Activated B cell treated with CpG ODN at 0.5 μM for 24 hours (primary cell): ENCODE measurements at regions of chr10 and their contacts with region 1.

Region 1: DNA sequence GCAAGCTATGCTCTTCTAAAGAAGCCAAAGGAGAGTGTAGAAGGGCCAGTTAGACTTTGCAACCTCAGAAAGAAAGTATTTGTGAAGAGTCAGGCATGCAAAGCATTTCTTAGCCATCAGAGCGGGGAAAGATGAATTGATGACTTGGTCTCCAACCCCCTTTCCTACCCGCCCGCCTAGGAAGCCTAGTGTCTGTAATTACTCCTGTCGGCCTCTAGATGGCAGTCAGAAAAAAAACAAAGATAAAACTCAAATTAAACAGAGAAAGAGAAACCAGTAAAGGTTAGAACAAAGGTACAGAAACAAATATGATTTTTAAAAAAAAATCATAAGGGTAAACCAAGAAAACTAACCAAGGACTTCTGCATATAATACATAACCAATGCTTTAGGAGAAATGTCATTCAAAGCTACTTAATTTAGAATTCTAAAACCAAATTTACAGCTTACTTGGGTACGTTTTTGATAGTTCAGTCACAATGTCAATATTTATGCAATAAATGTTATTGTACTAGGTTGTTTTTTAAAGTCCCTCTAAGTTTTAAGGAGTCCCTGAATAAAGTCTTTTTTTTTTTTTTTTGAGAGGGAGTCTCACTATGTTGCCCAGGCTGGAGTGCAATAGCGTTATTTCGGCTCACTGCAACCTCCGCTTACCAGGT is 97.6 kb downstream of the LYZL1 start:
- DNase-seq: no peak
- ATAC-seq: peak; percentile 49
- H3K4me3 Mint-ChIP-seq: no peak overlapping the region
- H3K27ac Mint-ChIP-seq: no peak overlapping the region
- H3K4me1 Mint-ChIP-seq: no peaks in the 10 kb centered on the region
- H3K27me3 Mint-ChIP-seq: peaks cover 4% of the 10 kb centered on the region
- CTCF ChIP-seq: peak; percentile 34

Region 2: DNA sequence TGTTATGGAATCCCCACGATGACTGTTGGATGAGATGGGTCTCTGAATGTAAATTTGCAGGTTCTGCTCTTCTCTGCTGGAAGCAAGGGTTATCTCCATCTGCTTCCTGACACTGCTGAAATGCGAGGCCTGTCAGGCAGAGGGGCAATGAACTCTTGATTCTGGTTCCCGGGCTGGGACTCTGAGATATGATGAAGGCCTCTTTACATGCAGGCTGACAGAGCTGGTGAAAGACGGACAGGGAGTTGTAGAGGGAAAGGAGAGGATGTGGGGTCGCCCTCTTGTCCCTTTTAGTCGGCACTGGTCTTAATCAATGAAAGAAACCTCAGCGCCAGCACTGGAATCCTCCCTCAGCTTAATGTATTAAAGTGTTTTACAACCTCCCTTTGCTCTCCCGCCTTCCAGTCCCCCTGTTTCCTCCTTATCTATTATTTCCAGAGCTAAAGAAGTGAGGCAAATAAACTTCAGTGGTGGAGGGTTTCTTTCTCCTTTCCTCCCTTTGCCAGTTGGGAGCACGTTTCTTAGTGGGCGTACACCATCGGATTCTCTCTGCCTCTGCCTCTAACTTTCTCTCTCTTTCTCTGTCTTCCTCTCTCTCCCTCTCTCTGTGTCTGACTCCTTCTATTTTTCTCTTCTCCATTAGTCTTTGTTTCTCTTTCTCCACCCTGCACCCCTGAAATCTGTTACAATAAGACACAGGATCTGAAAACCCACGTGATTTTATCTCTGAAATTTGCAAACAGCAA is 563.6 kb before region 1 on chr10:
- CTCF ChIA-PET with region 1: no interaction called
- POLR2A ChIA-PET with region 1: no interaction called
- intact Hi-C with region 1: no loop called
- DNase-seq: no peak
- ATAC-seq: no peak
- H3K4me3 Mint-ChIP-seq: no peak overlapping the region
- H3K27ac Mint-ChIP-seq: no peak overlapping the region
- H3K4me1 Mint-ChIP-seq: no peaks in the 10 kb centered on the region
- H3K27me3 Mint-ChIP-seq: no peaks in the 10 kb centered on the region
- CTCF ChIP-seq: no peak

Region 3: GRCh38 chr10:29496341-29497162 is 110.1 kb after region 1 on chr10:
- CTCF ChIA-PET with region 1: interaction called, 4 read pairs
- POLR2A ChIA-PET with region 1: no interaction called
- intact Hi-C with region 1: loop called (anchors 2 kb)
- DNase-seq: no peak
- ATAC-seq: peak; percentile 42
- H3K4me3 Mint-ChIP-seq: no peak overlapping the region
- H3K27ac Mint-ChIP-seq: no peak overlapping the region
- H3K4me1 Mint-ChIP-seq: no peaks in the 10 kb centered on the region
- H3K27me3 Mint-ChIP-seq: peaks cover 3% of the 10 kb centered on the region
- CTCF ChIP-seq: peak; percentile 54

Region 4: GRCh38 chr10:29590915-29591650 is 204.6 kb after region 1 on chr10:
- CTCF ChIA-PET with region 1: no interaction called
- POLR2A ChIA-PET with region 1: no interaction called
- intact Hi-C with region 1: loop called (anchors 2 kb)
- DNase-seq: no peak
- ATAC-seq: no peak
- H3K4me3 Mint-ChIP-seq: no peak overlapping the region
- H3K27ac Mint-ChIP-seq: no peak overlapping the region
- H3K4me1 Mint-ChIP-seq: peaks cover 8% of the 10 kb centered on the region
- H3K27me3 Mint-ChIP-seq: no peaks in the 10 kb centered on the region
- CTCF ChIP-seq: no peak